Activated CD4-positive, alpha-beta T cell treated with anti-CD3 and anti-CD28 coated beads, Interleukin-2, amount 10 ng/mL, durations not matched to agents 24 days and 14 days (primary cell): ENCODE measurements at regions of chr11 and their contacts with region 1.

Region 1: DNA sequence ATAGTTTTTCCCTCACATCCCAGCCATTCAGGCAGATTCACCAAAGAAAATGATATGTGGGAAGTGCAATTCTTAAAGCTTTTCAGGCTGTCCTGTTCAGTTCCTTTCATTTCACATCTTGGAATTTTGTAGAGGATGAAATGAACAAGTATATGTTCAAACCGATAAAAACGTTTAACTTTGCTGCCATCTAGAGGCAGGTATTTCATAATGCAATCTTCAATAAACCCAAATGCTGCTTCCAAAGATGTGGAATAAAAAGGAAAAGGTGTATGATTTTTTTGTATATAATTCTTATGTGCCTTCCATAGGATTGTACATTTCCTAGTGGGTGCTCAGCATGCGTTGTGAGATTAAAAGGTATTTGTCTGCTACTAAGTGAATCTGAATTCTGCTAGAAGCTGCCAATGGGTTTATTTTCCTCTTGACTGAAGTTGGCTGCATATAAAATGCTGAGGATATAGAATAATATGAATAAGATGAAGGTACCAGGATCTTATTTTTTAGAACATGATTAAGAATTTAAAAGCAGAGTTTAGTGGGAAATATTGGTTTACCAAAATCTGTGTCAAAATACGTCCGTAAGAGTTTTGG is 199.3 kb downstream of the PGR start:
- DNase-seq: no peak
- H3K4me3 Mint-ChIP-seq: no peak overlapping the region
- H3K27ac Mint-ChIP-seq: no peak overlapping the region
- H3K4me1 Mint-ChIP-seq: no peaks in the 10 kb centered on the region
- H3K27me3 Mint-ChIP-seq: no peaks in the 10 kb centered on the region

Region 2: DNA sequence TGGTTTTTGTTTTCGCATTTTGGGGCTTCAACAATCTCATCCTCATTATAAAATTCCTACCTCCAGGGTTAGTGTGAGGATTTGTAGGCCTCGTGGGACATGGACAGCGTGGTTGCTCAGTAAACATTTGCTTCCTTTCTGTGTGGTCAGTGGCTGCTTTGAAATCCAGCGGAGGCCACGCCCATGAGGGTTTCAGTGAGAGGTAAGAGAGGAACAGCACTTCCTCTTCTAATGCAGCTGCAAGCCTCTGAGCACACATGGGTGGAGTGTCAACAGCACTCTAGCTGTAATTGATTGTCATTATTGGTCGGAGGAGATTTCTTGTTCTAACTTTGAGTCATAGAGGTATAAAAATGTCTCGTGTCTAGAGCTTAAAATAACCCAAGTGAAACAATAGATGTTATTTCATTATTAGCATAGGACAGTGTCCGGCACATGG is 249.2 kb before region 1 on chr11:
- intact Hi-C with region 1: loop called (anchors 5 kb)
- DNase-seq: peak; percentile 71
- H3K4me3 Mint-ChIP-seq: no peak overlapping the region
- H3K27ac Mint-ChIP-seq: no peak overlapping the region
- H3K4me1 Mint-ChIP-seq: peaks cover 3% of the 10 kb centered on the region
- H3K27me3 Mint-ChIP-seq: peaks cover 6% of the 10 kb centered on the region